ENCODE measurements at regions of chr1 and their contacts with region 1.

Region 1: GRCh38 chr1:174039027-174039426 is 16.9 kb upstream of the RC3H1 start:
- DNase-seq: no peak
- H3K4me3 ChIP-seq: no peak overlapping the region
- H3K27ac ChIP-seq: no peak overlapping the region
- H3K27me3 ChIP-seq: no peaks in the 10 kb centered on the region
- CTCF ChIP-seq: no peak

Region 2: GRCh38 chr1:173986951-173987350 is 52.1 kb before region 1 on chr1:
- intact Hi-C with region 1: loop called in 1 of 2 experiments (anchors 2 kb)
- DNase-seq: no peak
- H3K4me3 ChIP-seq: no peak overlapping the region
- H3K27ac ChIP-seq: peak overlapping the region in 3 of 59 donors; percentile 16 to 29 (median 17)
- H3K27me3 ChIP-seq: no peaks in the 10 kb centered on the region
- CTCF ChIP-seq: no peak

Region 3: DNA sequence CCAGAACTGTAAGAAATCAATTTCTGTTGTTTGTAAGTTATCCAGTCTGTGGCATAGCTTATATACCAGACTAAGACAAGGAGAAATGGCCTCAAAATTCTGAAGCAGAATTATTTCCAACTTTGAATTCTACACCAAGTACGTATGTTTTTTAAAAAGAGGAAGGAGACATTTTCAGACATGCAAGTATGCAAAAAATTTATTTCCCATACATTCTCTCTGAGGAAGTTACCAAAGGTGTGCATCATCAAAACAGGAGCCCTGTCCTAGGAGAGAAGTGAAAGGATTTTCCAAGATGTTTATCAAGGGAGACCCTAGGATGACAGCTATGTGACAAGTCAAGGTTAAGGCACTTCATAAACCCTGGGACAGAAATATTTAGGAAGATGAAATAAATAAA is 71.0 kb after region 1 on chr1:
- intact Hi-C with region 1: no loop called
- DNase-seq: no peak
- H3K4me3 ChIP-seq: no peak overlapping the region
- H3K27ac ChIP-seq: no peak overlapping the region
- H3K27me3 ChIP-seq: peaks cover 0 to 3% (median 0%) of the 10 kb centered on the region in 45 donors
- CTCF ChIP-seq: no peak